ENCODE measurements at regions of chr20 and their contacts with region 1.

Region 1: DNA sequence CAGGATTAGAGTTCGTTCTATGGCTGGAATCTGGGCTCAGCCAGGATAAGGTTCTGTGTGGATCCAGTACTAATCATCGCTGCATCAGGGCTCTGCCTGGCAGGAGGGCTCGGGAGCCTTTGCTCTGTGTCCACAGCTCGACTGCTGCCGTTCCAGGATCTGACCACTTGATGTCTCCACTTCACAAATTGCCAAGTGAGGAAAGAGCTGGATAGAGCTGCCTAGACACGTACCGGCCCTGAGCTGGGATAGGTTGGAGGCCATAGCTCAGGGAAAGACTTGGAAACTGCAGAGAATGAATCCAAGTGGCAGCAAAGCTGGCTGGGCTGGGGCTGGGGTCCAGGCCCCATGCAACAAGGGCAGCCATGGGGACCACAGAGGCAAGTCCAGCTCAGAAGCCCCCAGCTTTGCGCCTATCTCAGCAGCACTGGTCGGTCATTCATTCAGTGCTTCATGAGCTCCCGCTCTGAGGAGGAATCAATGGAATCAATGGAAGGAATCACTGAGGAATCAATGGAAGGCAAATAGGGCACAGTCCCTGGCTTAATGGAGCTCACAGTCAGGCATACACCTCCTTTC is 38.0 kb upstream of the TOP1 start:
- DNase-seq: peak; percentile 95
- H3K4me3 ChIP-seq: no peak overlapping the region
- H3K4me3 Mint-ChIP-seq: no peak overlapping the region
- H3K27ac Mint-ChIP-seq: peak overlapping the region; percentile 62
- H3K4me1 ChIP-seq: peaks cover 12% of the 10 kb centered on the region
- H3K4me1 Mint-ChIP-seq: peaks cover 17% of the 10 kb centered on the region
- H3K27me3 ChIP-seq: no peaks in the 10 kb centered on the region
- H3K27me3 Mint-ChIP-seq: no peaks in the 10 kb centered on the region
- CTCF ChIP-seq: peak; percentile 96 to 99

Region 2: GRCh38 chr20:40902661-40903060 is 88.0 kb before region 1 on chr20:
- CTCF ChIA-PET with region 1: no interaction called
- POLR2A ChIA-PET with region 1: no interaction called
- intact Hi-C with region 1: no loop called
- DNase-seq: no peak
- H3K4me3 ChIP-seq: no peak overlapping the region
- H3K4me3 Mint-ChIP-seq: no peak overlapping the region
- H3K27ac Mint-ChIP-seq: no peak overlapping the region
- H3K4me1 ChIP-seq: peaks cover 16% of the 10 kb centered on the region
- H3K4me1 Mint-ChIP-seq: peaks cover 14% of the 10 kb centered on the region
- H3K27me3 ChIP-seq: no peaks in the 10 kb centered on the region
- H3K27me3 Mint-ChIP-seq: peaks cover 14% of the 10 kb centered on the region
- CTCF ChIP-seq: no peak

Region 3: GRCh38 chr20:40962730-40963504 is 27.7 kb before region 1 on chr20:
- CTCF ChIA-PET with region 1: interaction called, 26 read pairs
- POLR2A ChIA-PET with region 1: interaction called, 5 read pairs
- intact Hi-C with region 1: loop called (anchors 1 kb)
- DNase-seq: peak; percentile 91 to 96
- H3K4me3 ChIP-seq: peak overlapping the region; percentile 28
- H3K4me3 Mint-ChIP-seq: peak overlapping the region; percentile 53
- H3K27ac Mint-ChIP-seq: no peak overlapping the region
- H3K4me1 ChIP-seq: peaks cover 11% of the 10 kb centered on the region
- H3K4me1 Mint-ChIP-seq: peaks cover 10% of the 10 kb centered on the region
- H3K27me3 ChIP-seq: no peaks in the 10 kb centered on the region
- H3K27me3 Mint-ChIP-seq: peaks cover 3% of the 10 kb centered on the region
- CTCF ChIP-seq: peak; percentile 96 to 99

Region 4: GRCh38 chr20:41011551-41012067 is 21.0 kb after region 1 on chr20:
- CTCF ChIA-PET with region 1: interaction called, 47 read pairs
- POLR2A ChIA-PET with region 1: interaction called, 7 read pairs
- intact Hi-C with region 1: loop called (anchors 1 kb)
- DNase-seq: no peak
- H3K4me3 ChIP-seq: no peak overlapping the region
- H3K4me3 Mint-ChIP-seq: no peak overlapping the region
- H3K27ac Mint-ChIP-seq: peak overlapping the region; percentile 16
- H3K4me1 ChIP-seq: peaks cover 56% of the 10 kb centered on the region
- H3K4me1 Mint-ChIP-seq: peaks cover 57% of the 10 kb centered on the region
- H3K27me3 ChIP-seq: no peaks in the 10 kb centered on the region
- H3K27me3 Mint-ChIP-seq: no peaks in the 10 kb centered on the region
- CTCF ChIP-seq: no peak

Region 5: GRCh38 chr20:41028348-41029148 is 37.9 kb after region 1 on chr20 and contains the start of gene TOP1:
- CTCF ChIA-PET with region 1: interaction called, 21 read pairs
- POLR2A ChIA-PET with region 1: interaction called, 16 read pairs
- intact Hi-C with region 1: loop called (anchors 1 kb)
- DNase-seq: peak; percentile 100
- H3K4me3 ChIP-seq: peak within 1 kb of the TSS; percentile 99
- H3K4me3 Mint-ChIP-seq: peak within 1 kb of the TSS; percentile 96
- H3K27ac Mint-ChIP-seq: peak within 1 kb of the TSS; percentile 100
- H3K4me1 ChIP-seq: peaks cover 40% of the 10 kb centered on the region
- H3K4me1 Mint-ChIP-seq: peaks cover 53% of the 10 kb centered on the region
- H3K27me3 ChIP-seq: no peaks in the 10 kb centered on the region
- H3K27me3 Mint-ChIP-seq: no peaks in the 10 kb centered on the region
- CTCF ChIP-seq: peak in 1 of 2 experiments; percentile 19
- total RNA-seq, gene TOP1: 142 and 144 TPM in 2 replicates

Region 6: DNA sequence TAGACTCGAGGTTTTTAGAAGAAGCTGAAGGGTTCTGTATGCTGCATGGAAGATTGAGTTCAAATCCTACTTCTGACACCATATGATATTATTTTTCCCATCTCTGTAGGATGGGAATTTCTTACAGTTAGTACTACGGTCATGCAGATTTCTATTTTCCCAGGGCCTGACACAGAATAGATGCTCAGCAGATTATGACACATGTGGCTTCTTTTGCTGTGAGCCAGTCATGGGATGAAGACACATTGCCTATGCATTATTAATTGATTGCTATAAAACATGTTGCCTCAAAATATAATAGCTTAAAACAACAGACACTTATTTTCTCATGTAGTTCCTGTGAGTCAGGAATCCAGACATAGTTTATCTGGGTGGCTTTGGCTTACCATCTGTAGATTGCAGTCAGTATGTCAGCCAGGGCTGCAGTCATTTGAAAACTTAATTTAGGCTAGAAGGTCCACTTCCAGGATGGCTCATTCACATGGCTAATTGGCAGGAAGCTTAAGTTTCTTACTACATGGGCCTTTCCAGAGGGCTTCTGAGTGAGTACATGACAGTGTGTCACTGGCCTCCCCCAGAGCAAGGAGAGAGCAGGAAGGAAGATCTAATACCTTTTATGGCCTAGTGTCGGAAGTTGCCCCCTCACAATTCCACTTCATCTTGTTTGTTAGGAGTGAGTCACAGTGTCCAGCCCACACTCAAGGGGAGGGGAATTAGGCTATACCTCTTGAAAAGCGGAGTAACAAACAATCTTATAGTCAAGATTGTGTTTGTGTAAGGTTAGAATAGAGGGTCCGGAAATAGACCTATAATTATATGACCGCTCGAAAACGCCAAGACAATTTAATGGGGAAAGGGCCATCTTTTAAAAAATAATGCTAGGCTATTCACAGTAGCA is 67.6 kb after region 1 on chr20:
- CTCF ChIA-PET with region 1: interaction called, 14 read pairs
- POLR2A ChIA-PET with region 1: interaction called, 3 read pairs
- intact Hi-C with region 1: no loop called
- DNase-seq: peak in 1 of 2 experiments; percentile 56
- H3K4me3 ChIP-seq: no peak overlapping the region
- H3K4me3 Mint-ChIP-seq: no peak overlapping the region
- H3K27ac Mint-ChIP-seq: no peak overlapping the region
- H3K4me1 ChIP-seq: peaks cover 10% of the 10 kb centered on the region; the same call in 1 of the 2 replicates
- H3K4me1 Mint-ChIP-seq: peaks cover 32% of the 10 kb centered on the region
- H3K27me3 ChIP-seq: no peaks in the 10 kb centered on the region
- H3K27me3 Mint-ChIP-seq: no peaks in the 10 kb centered on the region
- CTCF ChIP-seq: no peak

Region 7: DNA sequence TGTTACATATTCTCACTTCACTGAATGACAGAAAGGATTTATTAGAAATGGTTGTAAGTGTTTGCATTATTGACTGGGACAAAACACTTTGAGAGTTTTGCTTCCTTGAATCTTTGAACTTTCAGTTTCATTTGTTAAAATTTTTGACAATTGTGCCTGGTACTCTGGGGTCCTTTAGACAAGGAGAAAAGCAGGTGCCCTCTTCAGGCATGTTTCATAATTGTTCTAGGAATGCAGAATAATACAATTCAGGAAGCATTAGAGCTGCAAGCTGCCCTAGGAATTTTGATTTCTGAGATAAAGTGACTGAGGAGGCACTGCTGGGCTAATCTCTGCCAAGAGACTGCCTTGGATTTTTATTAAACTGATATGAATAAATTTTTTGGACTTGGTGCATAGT is 87.7 kb after region 1 on chr20:
- CTCF ChIA-PET with region 1: interaction called, 110 read pairs
- POLR2A ChIA-PET with region 1: interaction called, 4 read pairs
- intact Hi-C with region 1: loop called (anchors 1 kb)
- DNase-seq: peak in 1 of 2 experiments; percentile 80
- H3K4me3 ChIP-seq: no peak overlapping the region
- H3K4me3 Mint-ChIP-seq: no peak overlapping the region
- H3K27ac Mint-ChIP-seq: peak overlapping the region; percentile 18
- H3K4me1 ChIP-seq: peaks cover 17% of the 10 kb centered on the region
- H3K4me1 Mint-ChIP-seq: peaks cover 29% of the 10 kb centered on the region
- H3K27me3 ChIP-seq: no peaks in the 10 kb centered on the region
- H3K27me3 Mint-ChIP-seq: no peaks in the 10 kb centered on the region
- CTCF ChIP-seq: peak; percentile 85 to 86

Region 8: GRCh38 chr20:41110930-41111577 is 120.4 kb after region 1 on chr20:
- CTCF ChIA-PET with region 1: interaction called, 10 read pairs
- POLR2A ChIA-PET with region 1: no interaction called
- intact Hi-C with region 1: no loop called
- DNase-seq: peak; percentile 88 to 90
- H3K4me3 ChIP-seq: no peak overlapping the region
- H3K4me3 Mint-ChIP-seq: peak overlapping the region; percentile 42
- H3K27ac Mint-ChIP-seq: peak overlapping the region; percentile 91
- H3K4me1 ChIP-seq: peaks cover 30% of the 10 kb centered on the region
- H3K4me1 Mint-ChIP-seq: peaks cover 30% of the 10 kb centered on the region
- H3K27me3 ChIP-seq: no peaks in the 10 kb centered on the region
- H3K27me3 Mint-ChIP-seq: no peaks in the 10 kb centered on the region
- CTCF ChIP-seq: no peak

Measured in Caco-2 (cell line).